Activated CD4-positive, alpha-beta T cell treated with anti-CD3 and anti-CD28 coated beads, Interleukin-2, amount 10 ng/mL, durations not matched to agents 7 days and 5 days (primary cell): ENCODE measurements at regions of chr17 and their contacts with region 1.

Region 1: DNA sequence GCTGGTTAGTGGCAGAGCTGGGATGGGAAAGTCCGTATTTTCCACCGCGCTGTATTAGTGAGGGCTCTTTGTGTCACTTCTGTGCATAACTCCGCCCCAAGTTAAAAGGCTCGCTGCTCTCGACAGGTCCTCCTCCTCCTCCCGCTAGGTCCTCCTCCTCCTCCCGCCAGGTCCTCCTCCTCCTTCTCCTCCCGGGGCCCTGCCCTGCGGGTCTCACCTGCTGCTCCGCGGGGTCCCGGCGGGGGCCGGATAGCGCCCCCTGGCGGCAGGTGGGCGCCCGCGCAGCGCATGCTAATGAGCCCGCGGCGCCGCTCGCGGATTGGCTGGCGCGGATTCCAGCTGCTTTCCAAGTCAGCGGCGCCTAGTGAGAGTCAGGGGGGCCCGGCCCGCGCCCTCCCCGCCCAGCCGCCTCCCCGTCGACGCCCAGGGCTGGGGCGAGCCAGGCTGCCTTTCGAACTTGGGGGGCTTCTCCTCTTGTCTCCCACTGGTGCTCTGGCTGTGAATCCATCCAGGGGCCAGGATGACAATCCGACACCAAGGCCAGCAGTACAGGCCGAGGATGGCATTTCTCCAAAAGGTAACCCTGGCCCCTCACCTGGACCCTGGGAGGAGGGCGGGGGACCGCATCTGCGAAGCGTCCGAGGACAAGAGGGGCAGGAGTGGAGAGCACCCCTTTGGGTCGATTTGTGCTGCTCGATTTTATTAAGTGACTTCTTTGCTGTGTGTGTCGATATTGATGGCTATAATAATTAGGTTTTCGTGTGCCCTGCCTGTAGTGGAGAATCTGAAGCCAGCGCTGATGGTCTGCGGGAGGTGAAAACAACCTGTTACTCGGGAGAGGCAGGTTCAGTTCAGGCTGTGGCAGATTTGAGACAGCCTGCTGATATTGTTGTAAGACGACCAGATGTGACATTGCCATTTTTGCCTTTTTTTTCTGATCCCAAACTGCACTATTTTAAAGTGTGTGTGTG is at the start of gene RGS9:
- DNase-seq: peak; percentile 86
- H3K4me3 Mint-ChIP-seq: peak within 1 kb of the TSS; percentile 75
- H3K27ac Mint-ChIP-seq: peak within 1 kb of the TSS; percentile 26
- H3K4me1 Mint-ChIP-seq: peaks cover 29% of the 10 kb centered on the region
- H3K27me3 Mint-ChIP-seq: peaks cover 20% of the 10 kb centered on the region
- total RNA-seq, gene RGS9: 6.0 to 6.3 TPM

Region 2: DNA sequence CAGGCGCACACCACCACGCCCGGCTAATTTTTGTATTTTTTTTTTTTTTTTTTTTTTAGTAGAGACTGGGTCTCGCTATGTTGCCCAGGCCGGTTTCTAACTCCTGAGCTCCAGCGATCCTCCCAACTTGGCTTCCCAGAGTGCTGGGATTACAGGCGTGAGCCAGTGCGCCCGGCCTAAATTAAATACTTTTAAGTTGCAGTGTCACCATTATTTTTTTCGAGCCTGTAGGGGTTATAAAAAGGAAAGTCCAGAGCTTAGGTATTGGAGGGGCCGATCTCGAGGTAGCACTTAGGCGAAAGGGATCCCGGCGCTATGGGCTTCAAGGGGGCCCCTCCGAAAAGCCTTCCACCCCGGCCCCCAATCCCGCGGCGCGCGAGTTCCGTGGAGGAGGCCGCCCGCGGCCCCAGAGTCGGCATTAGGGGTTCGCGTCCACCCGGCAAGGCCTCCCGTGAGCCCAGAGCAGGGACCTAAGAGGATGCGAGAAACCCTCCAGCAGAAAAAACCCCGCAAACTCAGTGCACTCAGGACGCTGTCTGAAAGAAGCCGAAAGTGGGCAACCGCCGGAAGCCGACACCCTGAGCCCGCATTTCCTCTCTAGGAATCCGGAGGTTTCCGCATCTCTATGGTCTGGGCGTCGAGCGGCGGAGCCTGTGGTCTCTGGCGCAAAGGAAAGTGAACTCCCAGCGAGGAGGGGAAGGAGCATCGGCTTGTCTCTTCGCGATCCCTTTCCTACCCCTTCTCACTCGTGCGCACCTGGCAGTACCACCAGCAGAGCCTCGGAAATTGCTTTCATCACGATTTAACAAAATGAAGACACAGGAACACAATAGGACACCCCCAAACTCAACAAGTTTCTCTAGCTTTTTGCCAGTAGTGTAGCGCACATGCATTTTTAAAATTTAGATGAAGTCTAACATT is 14.2 kb before region 1 on chr17:
- CTCF ChIA-PET with region 1: interaction called, 15 read pairs
- POLR2A ChIA-PET with region 1: no interaction called
- DNase-seq: peak; percentile 89
- H3K4me3 Mint-ChIP-seq: peak overlapping the region; percentile 80
- H3K27ac Mint-ChIP-seq: peak overlapping the region; percentile 92
- H3K4me1 Mint-ChIP-seq: peaks cover 30% of the 10 kb centered on the region
- H3K27me3 Mint-ChIP-seq: peaks cover 11% of the 10 kb centered on the region

Region 3: DNA sequence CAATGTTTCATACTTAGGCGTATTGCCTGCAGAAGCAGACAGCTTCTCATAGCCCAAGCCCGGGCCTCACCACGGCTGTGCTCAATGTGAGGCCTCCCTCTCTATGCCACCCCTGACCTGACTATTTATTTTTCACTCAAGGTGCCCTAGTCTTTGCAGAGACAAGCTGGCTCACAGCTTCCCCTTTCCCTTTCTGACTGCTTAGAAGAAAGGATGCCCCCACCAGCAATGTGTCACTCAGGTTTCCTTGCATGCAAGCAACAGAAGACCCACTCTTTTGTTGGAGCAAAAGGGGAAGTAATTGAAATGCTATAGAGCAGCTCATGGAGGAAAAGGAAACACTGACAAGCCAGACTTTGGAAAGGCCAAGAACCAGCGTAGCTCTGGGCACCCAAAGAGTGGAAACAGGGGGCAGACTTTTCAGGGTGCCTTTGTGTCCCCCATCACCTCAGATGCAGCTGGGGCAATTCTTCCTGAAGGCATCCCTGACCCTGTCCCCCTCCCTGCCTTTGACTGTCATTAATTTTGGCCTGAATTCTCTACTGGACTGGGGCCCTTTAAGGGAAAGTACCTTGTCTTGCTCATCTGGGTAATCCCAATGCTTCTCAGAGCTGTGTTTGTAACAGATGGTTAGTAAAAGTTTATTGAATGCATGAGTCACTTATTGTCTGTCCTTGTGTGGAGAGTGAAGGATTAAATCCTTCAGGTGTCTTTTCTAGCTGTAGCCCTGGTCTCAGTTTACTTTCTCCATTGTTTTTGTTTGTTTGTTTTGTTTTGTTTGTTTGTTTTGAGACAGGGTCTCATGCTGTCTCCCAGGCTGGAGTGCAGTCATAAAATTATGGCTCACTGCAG is 17.7 kb after region 1 on chr17:
- CTCF ChIA-PET with region 1: interaction called, 21 read pairs
- POLR2A ChIA-PET with region 1: no interaction called
- DNase-seq: no peak
- H3K4me3 Mint-ChIP-seq: no peak overlapping the region
- H3K27ac Mint-ChIP-seq: no peak overlapping the region
- H3K4me1 Mint-ChIP-seq: peaks cover 7% of the 10 kb centered on the region
- H3K27me3 Mint-ChIP-seq: peaks cover 4% of the 10 kb centered on the region

Region 4: DNA sequence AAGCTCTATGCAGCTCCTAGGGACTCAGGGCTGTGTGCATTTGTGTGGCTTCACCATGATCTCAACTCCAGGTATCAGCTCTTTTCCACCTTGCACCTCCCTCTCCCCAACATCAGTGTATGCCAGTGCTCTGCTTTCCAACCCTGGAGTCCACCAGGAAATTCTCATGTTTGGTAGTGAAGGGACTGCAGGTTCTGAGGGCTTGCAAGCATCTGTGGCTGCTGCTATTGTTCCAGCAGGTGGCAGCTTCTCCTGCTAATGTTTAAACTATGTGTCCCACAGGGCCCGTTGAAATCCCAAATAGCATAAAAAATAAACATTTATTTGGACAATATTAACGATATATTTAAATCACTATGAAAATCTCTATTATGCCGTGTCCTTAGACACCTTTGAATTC is 81.8 kb after region 1 on chr17:
- CTCF ChIA-PET with region 1: no interaction called
- POLR2A ChIA-PET with region 1: no interaction called
- DNase-seq: no peak
- H3K4me3 Mint-ChIP-seq: no peak overlapping the region
- H3K27ac Mint-ChIP-seq: no peak overlapping the region
- H3K4me1 Mint-ChIP-seq: no peaks in the 10 kb centered on the region
- H3K27me3 Mint-ChIP-seq: peaks cover 30% of the 10 kb centered on the region

Region 5: GRCh38 chr17:65268832-65269231 is 131.5 kb after region 1 on chr17:
- CTCF ChIA-PET with region 1: no interaction called
- POLR2A ChIA-PET with region 1: no interaction called
- DNase-seq: no peak
- H3K4me3 Mint-ChIP-seq: no peak overlapping the region
- H3K27ac Mint-ChIP-seq: no peak overlapping the region
- H3K4me1 Mint-ChIP-seq: peaks cover 12% of the 10 kb centered on the region
- H3K27me3 Mint-ChIP-seq: peaks cover 9% of the 10 kb centered on the region

Region 6: DNA sequence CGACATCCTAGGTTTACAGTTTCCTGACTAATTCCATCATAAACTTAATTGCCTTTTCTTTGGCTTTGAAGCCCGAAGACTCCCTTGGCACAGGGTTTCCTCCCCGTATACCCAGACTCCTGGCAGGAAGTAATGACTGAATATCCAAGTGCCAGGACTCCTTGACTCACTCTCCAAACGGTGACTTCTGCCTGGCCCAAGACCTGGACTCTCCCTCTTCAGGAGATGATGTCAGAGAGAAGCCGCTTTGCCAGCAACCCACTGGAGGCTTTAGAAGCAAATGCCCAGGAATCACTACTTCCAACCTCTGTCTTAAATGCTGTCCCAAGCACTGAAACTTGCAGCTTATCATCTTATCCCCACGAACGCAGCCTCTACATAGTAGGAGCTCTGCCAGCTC is 146.4 kb after region 1 on chr17:
- CTCF ChIA-PET with region 1: no interaction called
- POLR2A ChIA-PET with region 1: no interaction called
- DNase-seq: no peak
- H3K4me3 Mint-ChIP-seq: no peak overlapping the region
- H3K27ac Mint-ChIP-seq: no peak overlapping the region
- H3K4me1 Mint-ChIP-seq: no peaks in the 10 kb centered on the region
- H3K27me3 Mint-ChIP-seq: peaks cover 7% of the 10 kb centered on the region

Region 7: GRCh38 chr17:65418628-65419027 is 281.3 kb after region 1 on chr17:
- CTCF ChIA-PET with region 1: no interaction called
- POLR2A ChIA-PET with region 1: no interaction called
- DNase-seq: no peak
- H3K4me3 Mint-ChIP-seq: no peak overlapping the region
- H3K27ac Mint-ChIP-seq: no peak overlapping the region
- H3K4me1 Mint-ChIP-seq: no peaks in the 10 kb centered on the region
- H3K27me3 Mint-ChIP-seq: peaks cover 7% of the 10 kb centered on the region